PC-3 (cell line): ENCODE measurements at regions of chr10 and their contacts with region 1.

Region 1: GRCh38 chr10:103781329-103782061 is 73.9 kb downstream of the SH3PXD2A start:
- DNase-seq: peak; percentile 89
- ATAC-seq: peak; percentile 89
- H3K4me3 ChIP-seq: no peak overlapping the region
- H3K27ac ChIP-seq: peak overlapping the region; percentile 90
- H3K4me1 ChIP-seq: peaks cover 29% of the 10 kb centered on the region
- H3K27me3 ChIP-seq: no peaks in the 10 kb centered on the region
- CTCF ChIP-seq: peak; percentile 82

Region 2: DNA sequence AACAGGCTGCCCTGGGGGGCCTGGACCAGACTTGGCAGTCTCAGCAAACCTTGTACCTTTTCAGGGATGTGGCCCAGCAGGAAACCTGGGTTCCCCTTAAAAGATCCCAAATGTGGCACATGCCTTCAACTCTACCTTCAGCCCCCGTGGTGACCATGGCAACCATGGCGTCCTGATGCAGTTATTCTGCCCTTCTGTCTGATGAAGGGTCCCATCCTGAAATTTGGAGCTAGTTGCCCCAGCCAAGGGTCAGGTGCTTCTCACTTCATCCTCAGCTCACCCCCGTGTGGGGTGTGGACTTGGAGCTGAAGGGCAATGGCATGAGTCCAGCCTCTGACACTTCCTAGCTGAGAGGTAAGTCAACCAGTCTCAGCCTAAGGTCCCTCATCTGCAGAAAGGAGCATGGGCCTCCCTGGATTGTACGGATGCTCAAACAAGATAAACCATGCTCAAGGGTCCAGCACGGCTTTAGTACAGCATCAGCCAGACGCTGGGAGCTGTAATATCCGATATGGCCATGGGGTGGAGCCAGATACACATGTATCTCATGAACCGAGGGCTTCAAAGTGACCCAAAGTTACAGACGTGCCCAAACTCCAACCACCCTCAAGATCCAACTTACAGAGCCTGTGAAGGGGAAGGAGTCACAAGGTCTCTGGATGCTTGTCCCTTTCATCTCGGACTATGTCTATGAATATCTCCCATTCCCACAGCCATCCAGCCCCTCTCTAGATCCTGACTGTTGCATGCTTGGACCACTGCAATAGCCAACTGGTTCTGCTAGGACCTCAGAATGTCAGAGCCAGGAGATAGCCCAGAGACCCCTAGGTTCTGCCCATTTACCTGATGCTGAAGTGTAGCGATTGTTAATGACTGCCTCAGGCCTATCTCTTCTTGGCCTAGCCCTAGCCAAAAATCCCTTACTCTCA is 68.7 kb before region 1 on chr10:
- CTCF ChIA-PET with region 1: interaction called, 6 read pairs
- POLR2A ChIA-PET with region 1: no interaction called
- intact Hi-C with region 1: loop called (anchors 10 kb)
- DNase-seq: peak; percentile 89
- ATAC-seq: peak; percentile 45
- H3K4me3 ChIP-seq: no peak overlapping the region
- H3K27ac ChIP-seq: no peak overlapping the region
- H3K4me1 ChIP-seq: peaks cover 49% of the 10 kb centered on the region
- H3K27me3 ChIP-seq: no peaks in the 10 kb centered on the region
- CTCF ChIP-seq: peak; percentile 86

Region 3: GRCh38 chr10:103759100-103759781 is 22.3 kb before region 1 on chr10:
- CTCF ChIA-PET with region 1: interaction called, 11 read pairs
- POLR2A ChIA-PET with region 1: no interaction called
- intact Hi-C with region 1: no loop called
- DNase-seq: peak; percentile 52
- ATAC-seq: peak; percentile 14
- H3K4me3 ChIP-seq: peak overlapping the region; percentile 7; the same call in 1 of the 2 replicates
- H3K27ac ChIP-seq: peak overlapping the region; percentile 94
- H3K4me1 ChIP-seq: peaks cover 60% of the 10 kb centered on the region
- H3K27me3 ChIP-seq: no peaks in the 10 kb centered on the region
- CTCF ChIP-seq: no peak